Activated B cell treated with CpG ODN at 0.5 μM for 24 hours (primary cell): ENCODE measurements at regions of chr14 and their contacts with region 1.

Region 1: DNA sequence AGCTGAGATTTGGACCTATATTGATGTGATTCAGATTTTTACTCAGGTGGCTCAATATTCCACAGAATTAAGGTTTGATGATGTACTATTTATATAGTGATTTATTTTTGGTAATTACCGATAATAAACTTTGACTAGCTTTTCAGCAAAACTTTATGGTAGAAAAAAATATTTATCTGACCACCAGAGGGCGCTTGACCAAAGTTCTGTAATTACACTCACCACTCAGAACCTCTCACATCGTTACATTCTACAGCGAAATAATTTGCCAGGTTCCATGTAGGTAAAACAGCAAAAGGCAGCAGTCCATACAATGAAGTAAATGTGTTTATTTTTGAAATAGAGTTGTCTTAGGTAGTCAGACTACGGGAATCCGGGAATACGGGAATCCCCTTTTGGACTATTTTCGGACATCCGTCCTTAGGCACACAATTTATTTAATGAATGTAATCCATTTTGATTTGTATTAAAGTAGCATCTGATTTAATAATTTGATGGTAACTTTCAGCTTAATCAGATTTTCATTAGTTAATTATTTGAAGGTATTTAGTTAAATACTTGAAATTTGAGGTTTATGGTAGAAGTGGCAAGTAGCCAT is 143.0 kb upstream of the DDHD1 start:
- DNase-seq: no peak
- ATAC-seq: no peak
- H3K4me3 Mint-ChIP-seq: no peak overlapping the region
- H3K27ac Mint-ChIP-seq: no peak overlapping the region
- H3K4me1 Mint-ChIP-seq: no peaks in the 10 kb centered on the region
- H3K27me3 Mint-ChIP-seq: no peaks in the 10 kb centered on the region
- CTCF ChIP-seq: peak; percentile 44

Region 2: GRCh38 chr14:53306267-53306721 is 10.2 kb after region 1 on chr14:
- CTCF ChIA-PET with region 1: interaction called, 30 read pairs
- POLR2A ChIA-PET with region 1: no interaction called
- intact Hi-C with region 1: no loop called
- DNase-seq: no peak
- ATAC-seq: peak; percentile 42
- H3K4me3 Mint-ChIP-seq: peak overlapping the region; percentile 30
- H3K27ac Mint-ChIP-seq: no peak overlapping the region
- H3K4me1 Mint-ChIP-seq: peaks cover 17% of the 10 kb centered on the region
- H3K27me3 Mint-ChIP-seq: peaks cover 11% of the 10 kb centered on the region
- CTCF ChIP-seq: peak; percentile 68

Region 3: GRCh38 chr14:53325176-53325806 is 29.2 kb after region 1 on chr14:
- CTCF ChIA-PET with region 1: interaction called, 18 read pairs
- POLR2A ChIA-PET with region 1: no interaction called
- intact Hi-C with region 1: loop called (anchors 1 kb)
- DNase-seq: no peak
- ATAC-seq: no peak
- H3K4me3 Mint-ChIP-seq: no peak overlapping the region
- H3K27ac Mint-ChIP-seq: no peak overlapping the region
- H3K4me1 Mint-ChIP-seq: no peaks in the 10 kb centered on the region
- H3K27me3 Mint-ChIP-seq: no peaks in the 10 kb centered on the region
- CTCF ChIP-seq: no peak

Region 4: GRCh38 chr14:53581504-53581903 is 285.4 kb after region 1 on chr14:
- CTCF ChIA-PET with region 1: no interaction called
- POLR2A ChIA-PET with region 1: no interaction called
- intact Hi-C with region 1: no loop called
- DNase-seq: no peak
- ATAC-seq: no peak
- H3K4me3 Mint-ChIP-seq: no peak overlapping the region
- H3K27ac Mint-ChIP-seq: no peak overlapping the region
- H3K4me1 Mint-ChIP-seq: no peaks in the 10 kb centered on the region
- H3K27me3 Mint-ChIP-seq: peaks cover 5% of the 10 kb centered on the region
- CTCF ChIP-seq: no peak

Region 5: DNA sequence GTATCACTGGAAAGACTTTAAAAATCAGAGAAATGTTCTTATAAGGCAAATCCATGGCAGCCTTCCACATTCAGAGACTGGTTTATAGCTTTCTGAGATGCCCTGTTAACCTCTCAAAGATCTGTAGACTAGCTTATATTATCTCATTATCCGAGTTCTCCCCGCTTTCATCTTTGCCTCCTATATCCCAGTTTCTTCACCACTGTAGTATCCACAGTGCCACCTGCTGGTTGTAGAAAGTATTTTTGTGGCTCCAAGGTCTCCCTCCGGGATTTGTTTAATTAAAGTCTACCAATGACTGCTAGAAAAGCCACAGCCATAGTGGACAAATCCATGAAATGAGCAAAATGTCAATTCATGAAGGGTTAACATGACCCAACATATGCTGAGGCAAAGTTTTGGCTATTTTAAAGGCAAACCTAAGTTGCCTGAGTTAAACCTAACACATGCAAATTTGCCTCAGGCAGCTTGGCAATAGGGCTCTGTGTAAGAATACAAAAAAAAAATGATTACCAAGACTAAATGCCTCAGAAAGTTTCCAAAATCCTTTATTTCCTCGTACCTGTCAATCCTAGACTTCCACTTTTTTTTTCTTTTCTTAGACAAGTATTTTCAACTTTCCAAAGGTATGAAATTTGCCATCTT is 879.3 kb after region 1 on chr14:
- CTCF ChIA-PET with region 1: no interaction called
- POLR2A ChIA-PET with region 1: no interaction called
- intact Hi-C with region 1: loop called (anchors 1 kb)
- DNase-seq: no peak
- ATAC-seq: no peak
- H3K4me3 Mint-ChIP-seq: no peak overlapping the region
- H3K27ac Mint-ChIP-seq: no peak overlapping the region
- H3K4me1 Mint-ChIP-seq: no peaks in the 10 kb centered on the region
- H3K27me3 Mint-ChIP-seq: peaks cover 10% of the 10 kb centered on the region
- CTCF ChIP-seq: peak; percentile 66

Region 6: GRCh38 chr14:54329082-54329695 is 1033.1 kb after region 1 on chr14:
- CTCF ChIA-PET with region 1: no interaction called
- POLR2A ChIA-PET with region 1: no interaction called
- intact Hi-C with region 1: loop called (anchors 5 kb)
- DNase-seq: no peak
- ATAC-seq: peak; percentile 52
- H3K4me3 Mint-ChIP-seq: no peak overlapping the region
- H3K27ac Mint-ChIP-seq: no peak overlapping the region
- H3K4me1 Mint-ChIP-seq: no peaks in the 10 kb centered on the region
- H3K27me3 Mint-ChIP-seq: peaks cover 15% of the 10 kb centered on the region
- CTCF ChIP-seq: no peak

Region 7: DNA sequence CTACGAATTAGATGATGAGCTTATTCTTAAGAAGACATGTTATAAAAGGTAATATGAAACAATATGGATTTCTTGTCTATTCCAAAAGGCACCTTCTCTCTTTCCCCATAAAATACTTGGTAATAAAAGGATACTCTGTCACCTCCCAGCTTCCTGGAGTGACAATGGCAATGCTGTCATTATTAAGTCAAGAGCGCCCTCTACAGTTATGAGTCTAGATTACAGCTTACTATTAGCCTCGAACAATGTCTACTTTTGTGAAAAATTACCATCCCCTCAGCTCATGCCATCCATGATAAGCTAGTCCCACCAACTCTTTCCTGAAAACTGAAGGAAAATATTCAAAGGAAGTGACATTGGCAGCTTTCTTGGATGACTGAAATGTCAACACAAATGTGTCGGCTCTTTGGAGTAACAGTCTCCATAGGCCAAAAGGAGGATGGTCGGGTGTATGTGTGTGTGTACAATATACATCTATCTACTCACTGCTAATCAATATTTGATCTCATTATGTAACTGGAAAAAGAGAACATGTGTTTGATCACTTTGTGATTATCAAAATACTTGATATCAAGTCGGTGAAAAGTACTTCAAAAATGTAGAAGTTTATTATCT is 1052.0 kb after region 1 on chr14:
- CTCF ChIA-PET with region 1: interaction called, 28 read pairs
- POLR2A ChIA-PET with region 1: no interaction called
- intact Hi-C with region 1: loop called (anchors 1 kb)
- DNase-seq: no peak
- ATAC-seq: peak; percentile 21
- H3K4me3 Mint-ChIP-seq: no peak overlapping the region
- H3K27ac Mint-ChIP-seq: no peak overlapping the region
- H3K4me1 Mint-ChIP-seq: peaks cover 5% of the 10 kb centered on the region
- H3K27me3 Mint-ChIP-seq: peaks cover 4% of the 10 kb centered on the region
- CTCF ChIP-seq: no peak